ENCODE measurements at regions of chr14 and their contacts with region 1.

Region 1: GRCh38 chr14:21913759-21914158 is 240.1 kb upstream of the OR4E1 start:
- DNase-seq: peak; percentile 66

Region 2: DNA sequence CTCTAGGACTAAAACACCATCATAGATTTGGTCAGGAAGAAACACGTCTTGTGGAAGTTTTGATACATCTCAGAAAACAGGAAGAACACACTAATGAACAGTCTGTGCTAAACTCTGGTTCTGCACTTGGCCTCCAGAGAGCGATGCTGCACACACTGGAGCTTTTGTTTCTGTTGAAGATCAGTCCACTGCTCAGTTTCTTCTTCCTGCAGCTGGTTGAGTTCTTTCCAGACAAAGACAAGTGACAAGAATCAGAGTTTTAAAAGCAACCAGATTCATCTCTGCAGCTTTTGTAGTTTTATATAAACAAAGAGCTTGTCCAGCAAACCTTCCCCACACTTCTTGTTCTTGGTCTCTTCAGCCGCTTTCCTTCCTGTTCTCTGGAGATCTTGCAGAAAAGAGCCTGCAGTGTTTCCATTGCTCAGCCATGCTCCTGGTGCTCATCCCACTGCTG is 11.1 kb before region 1 on chr14:
- CTCF ChIA-PET with region 1: interaction called, 11 read pairs
- POLR2A ChIA-PET with region 1: no interaction called
- DNase-seq: no peak

Measured in HEK293T (cell line).